PC-9 (cell line): ENCODE measurements at regions of chr19 and their contacts with region 1.

Region 1: GRCh38 chr19:11881151-11881800 is 6.3 kb upstream of the ZNF69 start:
- DNase-seq: peak in 1 of 2 experiments; percentile 54
- H3K4me3 ChIP-seq: no peak overlapping the region
- H3K27ac ChIP-seq: no peak overlapping the region
- H3K4me1 ChIP-seq: no peaks in the 10 kb centered on the region
- H3K27me3 ChIP-seq: peaks cover 21% of the 10 kb centered on the region; the same call in 1 of the 2 replicates
- CTCF ChIP-seq: peak; percentile 80

Region 2: GRCh38 chr19:11798391-11799330 is 82.6 kb before region 1 on chr19 and contains the start of gene ZNF491:
- CTCF ChIA-PET with region 1: no interaction called
- POLR2A ChIA-PET with region 1: no interaction called
- intact Hi-C with region 1: loop called (anchors 5 kb)
- DNase-seq: peak in 1 of 2 experiments; percentile 69
- H3K4me3 ChIP-seq: peak within 1 kb of the TSS; percentile 19; the same call in 1 of the 2 replicates
- H3K27ac ChIP-seq: no peak within 1 kb of the TSS
- H3K4me1 ChIP-seq: no peaks in the 10 kb centered on the region
- H3K27me3 ChIP-seq: no peaks in the 10 kb centered on the region
- CTCF ChIP-seq: no peak
- total RNA-seq, gene ZNF491: not detected in 2 replicates

Region 3: GRCh38 chr19:11902228-11902627 is 21.0 kb after region 1 on chr19:
- CTCF ChIA-PET with region 1: no interaction called
- POLR2A ChIA-PET with region 1: no interaction called
- intact Hi-C with region 1: no loop called
- DNase-seq: no peak
- H3K4me3 ChIP-seq: no peak overlapping the region
- H3K27ac ChIP-seq: no peak overlapping the region
- H3K4me1 ChIP-seq: no peaks in the 10 kb centered on the region
- H3K27me3 ChIP-seq: peaks cover 26% of the 10 kb centered on the region; the same call in 1 of the 2 replicates
- CTCF ChIP-seq: no peak; the same call in 1 of the 2 replicates